Naive thymus-derived CD4-positive, alpha-beta T cell (primary cell): ENCODE measurements at regions of chr16 and their contacts with region 1.

Region 1: DNA sequence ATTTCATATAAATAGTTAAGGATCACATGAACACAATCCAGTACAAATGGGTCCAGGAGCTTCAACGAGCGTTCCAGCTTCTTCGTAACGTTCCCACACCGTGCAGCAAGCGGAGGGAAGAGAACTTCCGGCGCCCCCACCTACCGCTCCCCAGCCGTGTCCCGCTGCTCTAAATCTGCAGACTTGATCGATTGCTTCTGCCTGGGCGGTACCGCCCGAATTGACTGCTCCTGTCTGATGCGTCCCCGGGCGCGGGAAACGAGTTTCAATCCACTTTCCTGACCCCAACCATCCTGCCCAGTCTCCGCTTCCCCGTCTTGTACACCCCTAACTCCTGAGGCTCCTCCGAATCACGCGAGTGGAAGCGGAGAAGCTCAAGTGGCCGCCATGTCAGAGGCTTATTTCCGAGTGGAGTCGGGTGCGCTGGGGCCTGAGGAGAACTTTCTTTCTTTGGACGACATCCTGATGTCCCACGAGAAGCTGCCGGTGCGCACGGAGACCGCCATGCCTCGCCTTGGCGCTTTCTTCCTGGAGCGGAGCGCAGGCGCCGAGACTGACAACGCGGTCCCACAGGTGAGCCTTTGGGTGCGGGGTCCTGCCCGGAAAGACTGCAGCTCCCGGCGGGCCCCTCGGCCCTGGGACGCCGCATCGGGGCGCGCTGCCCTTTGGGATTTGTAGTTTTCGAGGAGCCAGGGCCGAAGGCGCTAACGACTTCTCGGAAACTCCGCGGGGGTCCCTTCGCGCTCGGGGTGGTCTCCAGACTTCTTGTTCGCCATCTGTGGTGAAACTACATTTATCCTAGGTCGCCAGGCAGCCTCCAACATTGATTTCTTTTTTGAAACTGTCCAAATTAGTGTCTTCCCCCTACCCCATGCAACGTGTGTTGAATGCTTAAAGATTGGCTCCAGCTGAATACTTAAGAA is at the start of gene GINS3:
- DNase-seq: peak; percentile 67 to 83 (median 81)
- ATAC-seq: peak; percentile 96
- H3K4me3 ChIP-seq: peak within 1 kb of the TSS; percentile 99
- H3K4me3 Mint-ChIP-seq: peak within 1 kb of the TSS; percentile 91 to 100 (median 98)
- H3K27ac ChIP-seq: peak within 1 kb of the TSS; percentile 80
- H3K27ac Mint-ChIP-seq: peak within 1 kb of the TSS; percentile 89 to 99 (median 95)
- H3K4me1 ChIP-seq: peaks cover 5 to 6% of the 10 kb centered on the region in 2 donors
- H3K4me1 Mint-ChIP-seq: peaks cover 3 to 28% (median 16%) of the 10 kb centered on the region in 7 donors
- H3K27me3 ChIP-seq: no peaks in the 10 kb centered on the region
- H3K27me3 Mint-ChIP-seq: peaks cover 0 to 21% (median 0%) of the 10 kb centered on the region in 5 donors
- total RNA-seq, gene GINS3: 0.66 to 13.3 (median 1.4) TPM

Region 2: GRCh38 chr16:57519796-57520360 is 872.6 kb before region 1 on chr16:
- CTCF ChIA-PET with region 1: no interaction called
- POLR2A ChIA-PET with region 1: no interaction called
- intact Hi-C with region 1: no loop called
- DNase-seq: peak; percentile 61 to 86 (median 73)
- ATAC-seq: peak; percentile 90
- H3K4me3 ChIP-seq: no peak overlapping the region
- H3K4me3 Mint-ChIP-seq: no peak overlapping the region
- H3K27ac ChIP-seq: no peak overlapping the region
- H3K27ac Mint-ChIP-seq: peak overlapping the region in 3 of 9 donors; percentile 62 to 83 (median 76)
- H3K4me1 ChIP-seq: peaks cover 7 to 8% of the 10 kb centered on the region in 2 donors
- H3K4me1 Mint-ChIP-seq: peaks cover 5 to 19% (median 6%) of the 10 kb centered on the region in 7 donors
- H3K27me3 ChIP-seq: no peaks in the 10 kb centered on the region
- H3K27me3 Mint-ChIP-seq: no peaks in the 10 kb centered on the region

Region 3: DNA sequence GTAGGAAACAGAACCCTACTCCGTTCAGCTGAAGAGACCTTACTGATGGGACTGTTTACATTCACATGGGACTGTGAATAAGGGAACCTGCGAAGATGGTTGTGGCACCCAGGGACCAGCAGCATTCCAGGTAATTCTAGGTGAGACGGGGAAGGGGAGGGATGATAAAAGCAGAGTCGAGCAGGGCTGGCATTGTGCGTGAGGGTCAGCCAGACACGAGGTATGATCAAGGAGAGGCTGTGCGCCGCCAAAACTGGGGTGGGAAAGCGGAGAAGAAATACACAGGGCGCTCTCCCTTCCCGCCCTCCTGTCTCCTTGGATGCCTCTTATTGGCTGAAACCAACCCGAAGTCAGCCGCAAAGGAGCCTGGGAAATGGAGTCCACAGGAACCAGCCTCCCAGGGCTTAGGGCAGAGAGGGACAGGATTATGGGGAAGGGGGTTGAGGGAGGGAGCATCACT is 156.2 kb before region 1 on chr16:
- CTCF ChIA-PET with region 1: no interaction called
- POLR2A ChIA-PET with region 1: no interaction called
- intact Hi-C with region 1: loop called in 1 of 2 experiments (anchors 1 kb)
- DNase-seq: peak; percentile 18 to 56 (median 45)
- ATAC-seq: peak; percentile 89
- H3K4me3 ChIP-seq: peak overlapping the region; percentile 64
- H3K4me3 Mint-ChIP-seq: peak overlapping the region; percentile 82 to 93 (median 89)
- H3K27ac ChIP-seq: no peak overlapping the region
- H3K27ac Mint-ChIP-seq: peak overlapping the region in 4 of 9 donors; percentile 5 to 36 (median 23)
- H3K4me1 ChIP-seq: peaks cover 8 to 10% of the 10 kb centered on the region in 2 donors
- H3K4me1 Mint-ChIP-seq: peaks cover 0 to 17% (median 13%) of the 10 kb centered on the region in 7 donors
- H3K27me3 ChIP-seq: no peaks in the 10 kb centered on the region
- H3K27me3 Mint-ChIP-seq: peaks cover 5 to 47% (median 21%) of the 10 kb centered on the region in 5 donors

Region 4: GRCh38 chr16:58336332-58337089 is 56.0 kb before region 1 on chr16:
- CTCF ChIA-PET with region 1: interaction called, 8 read pairs
- POLR2A ChIA-PET with region 1: no interaction called
- intact Hi-C with region 1: loop called in 1 of 2 experiments (anchors 1 kb)
- DNase-seq: peak; percentile 58 to 85 (median 77)
- ATAC-seq: peak; percentile 93
- H3K4me3 ChIP-seq: no peak overlapping the region
- H3K4me3 Mint-ChIP-seq: peak overlapping the region in 8 of 10 donors; percentile 18 to 74 (median 67)
- H3K27ac ChIP-seq: no peak overlapping the region
- H3K27ac Mint-ChIP-seq: no peak overlapping the region
- H3K4me1 ChIP-seq: no peaks in the 10 kb centered on the region
- H3K4me1 Mint-ChIP-seq: peaks cover 0 to 8% (median 5%) of the 10 kb centered on the region in 7 donors
- H3K27me3 ChIP-seq: no peaks in the 10 kb centered on the region
- H3K27me3 Mint-ChIP-seq: peaks cover 0 to 12% (median 5%) of the 10 kb centered on the region in 5 donors

Region 5: DNA sequence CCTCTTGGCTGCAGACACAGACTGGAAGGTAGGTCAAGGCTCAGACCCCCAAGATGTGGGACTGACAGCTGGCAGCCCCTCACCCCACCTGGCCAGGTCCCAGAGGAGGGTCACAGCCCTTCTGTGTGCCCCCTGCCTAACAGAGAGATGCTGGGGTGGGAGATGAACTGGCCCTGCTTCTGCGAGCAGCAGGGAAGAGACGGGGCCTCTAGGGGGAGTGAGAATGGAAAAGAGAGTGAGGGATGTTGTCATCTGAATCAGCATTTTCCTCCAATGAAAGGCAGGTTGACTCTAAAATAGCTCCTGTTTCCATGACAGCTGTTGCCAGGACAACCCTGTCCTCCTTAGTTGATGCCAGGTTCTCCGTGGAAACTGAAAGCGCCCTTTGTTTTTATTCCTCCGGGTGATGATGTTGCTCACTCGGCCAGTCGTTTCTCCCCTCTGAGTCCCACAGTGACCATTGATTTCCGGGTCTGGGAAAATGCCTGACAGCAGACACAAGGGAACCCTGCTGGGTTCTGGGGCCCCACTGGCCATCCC is 102.6 kb after region 1 on chr16:
- CTCF ChIA-PET with region 1: no interaction called
- POLR2A ChIA-PET with region 1: no interaction called
- intact Hi-C with region 1: loop called in 1 of 2 experiments (anchors 5 kb)
- DNase-seq: peak in 8 of 9 donors; percentile 23 to 83 (median 56)
- ATAC-seq: peak; percentile 63
- H3K4me3 ChIP-seq: no peak overlapping the region
- H3K4me3 Mint-ChIP-seq: peak overlapping the region in 1 of 10 donors; percentile 11
- H3K27ac ChIP-seq: no peak overlapping the region
- H3K27ac Mint-ChIP-seq: peak overlapping the region in 5 of 9 donors; percentile 36 to 75 (median 59)
- H3K4me1 ChIP-seq: peaks cover 0 to 3% of the 10 kb centered on the region in 2 donors
- H3K4me1 Mint-ChIP-seq: peaks cover 0 to 14% (median 3%) of the 10 kb centered on the region in 7 donors
- H3K27me3 ChIP-seq: no peaks in the 10 kb centered on the region
- H3K27me3 Mint-ChIP-seq: peaks cover 0 to 14% (median 0%) of the 10 kb centered on the region in 5 donors

Region 6: DNA sequence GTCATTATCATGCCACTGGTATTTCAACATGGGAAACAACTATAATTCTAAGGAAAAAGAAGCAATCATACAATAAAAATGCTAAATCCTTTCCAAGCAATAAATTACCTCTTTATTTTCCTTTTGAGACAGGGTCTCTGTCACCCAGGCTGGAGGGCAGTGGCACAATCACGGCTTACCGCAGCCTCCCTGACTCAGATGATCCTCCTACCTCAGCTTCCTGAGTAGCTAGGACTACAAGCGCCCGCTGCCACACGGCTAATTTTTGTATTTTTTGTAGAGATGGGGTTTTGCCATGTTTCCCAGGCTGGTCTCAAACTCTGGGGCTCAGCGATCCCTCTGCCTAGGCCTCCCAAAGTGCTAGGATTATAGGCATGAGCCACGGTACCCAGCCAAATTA is 213.1 kb after region 1 on chr16:
- CTCF ChIA-PET with region 1: no interaction called
- POLR2A ChIA-PET with region 1: no interaction called
- intact Hi-C with region 1: no loop called
- DNase-seq: no peak
- ATAC-seq: no peak
- H3K4me3 ChIP-seq: no peak overlapping the region
- H3K4me3 Mint-ChIP-seq: no peak overlapping the region
- H3K27ac ChIP-seq: no peak overlapping the region
- H3K27ac Mint-ChIP-seq: no peak overlapping the region
- H3K4me1 ChIP-seq: peaks cover 4% of the 10 kb centered on the region in 2 donors
- H3K4me1 Mint-ChIP-seq: peaks cover 27 to 54% (median 47%) of the 10 kb centered on the region in 7 donors
- H3K27me3 ChIP-seq: no peaks in the 10 kb centered on the region
- H3K27me3 Mint-ChIP-seq: no peaks in the 10 kb centered on the region

Region 7: DNA sequence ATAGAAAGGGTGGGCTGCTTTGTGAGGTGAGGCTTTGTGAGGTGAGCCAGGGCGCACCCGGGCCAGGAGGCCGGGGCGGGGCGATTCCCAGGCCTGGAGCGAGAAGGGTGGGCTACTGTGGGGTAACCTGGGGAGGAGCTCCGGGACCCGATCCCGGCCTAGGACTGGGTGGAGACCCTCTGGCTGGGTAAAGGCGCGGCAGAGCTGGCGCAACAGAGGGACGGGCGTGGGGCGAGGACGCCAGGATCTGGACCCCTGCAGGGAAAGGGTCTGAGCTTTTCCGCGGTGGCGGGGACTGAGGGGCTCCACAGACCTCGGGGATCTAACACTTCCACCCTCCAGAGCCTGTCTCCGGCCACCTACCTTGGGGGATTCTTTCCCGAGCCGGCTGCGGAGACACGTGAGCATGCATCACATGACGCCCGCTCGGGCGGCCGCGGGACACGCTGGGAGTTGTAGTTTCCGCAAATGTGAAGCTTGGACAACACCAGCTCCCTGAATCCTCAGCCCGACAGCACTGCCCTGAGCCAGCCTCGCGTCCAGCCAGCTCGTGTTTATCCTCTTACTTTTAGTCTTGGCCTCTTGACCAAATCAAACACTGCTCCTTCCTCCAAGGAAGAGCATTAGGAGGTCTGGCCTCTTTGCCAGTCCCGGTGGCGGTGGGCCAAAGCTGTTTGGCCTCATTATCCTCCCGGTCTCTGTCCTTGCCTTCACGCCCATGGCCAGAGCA is 292.0 kb after region 1 on chr16 and contains the start of gene SLC38A7:
- CTCF ChIA-PET with region 1: no interaction called
- POLR2A ChIA-PET with region 1: no interaction called
- intact Hi-C with region 1: loop called (anchors 1 kb)
- DNase-seq: peak; percentile 49 to 73 (median 60)
- ATAC-seq: peak; percentile 88
- H3K4me3 ChIP-seq: peak within 1 kb of the TSS; percentile 78
- H3K4me3 Mint-ChIP-seq: peak within 1 kb of the TSS; percentile 86 to 95 (median 91)
- H3K27ac ChIP-seq: peak within 1 kb of the TSS; percentile 71
- H3K27ac Mint-ChIP-seq: peak within 1 kb of the TSS; percentile 52 to 91 (median 86)
- H3K4me1 ChIP-seq: peaks cover 12 to 20% of the 10 kb centered on the region in 2 donors
- H3K4me1 Mint-ChIP-seq: peaks cover 6 to 27% (median 22%) of the 10 kb centered on the region in 7 donors
- H3K27me3 ChIP-seq: no peaks in the 10 kb centered on the region
- H3K27me3 Mint-ChIP-seq: peaks cover 0 to 4% (median 0%) of the 10 kb centered on the region in 5 donors
- total RNA-seq, gene SLC38A7: 10.2 to 16.8 (median 16.7) TPM